Activated naive CD4-positive, alpha-beta T cell treated with anti-CD3 and anti-CD28 coated beads for 36 hours (primary cell): ENCODE measurements at regions of chr5 and their contacts with region 1.

Region 1: DNA sequence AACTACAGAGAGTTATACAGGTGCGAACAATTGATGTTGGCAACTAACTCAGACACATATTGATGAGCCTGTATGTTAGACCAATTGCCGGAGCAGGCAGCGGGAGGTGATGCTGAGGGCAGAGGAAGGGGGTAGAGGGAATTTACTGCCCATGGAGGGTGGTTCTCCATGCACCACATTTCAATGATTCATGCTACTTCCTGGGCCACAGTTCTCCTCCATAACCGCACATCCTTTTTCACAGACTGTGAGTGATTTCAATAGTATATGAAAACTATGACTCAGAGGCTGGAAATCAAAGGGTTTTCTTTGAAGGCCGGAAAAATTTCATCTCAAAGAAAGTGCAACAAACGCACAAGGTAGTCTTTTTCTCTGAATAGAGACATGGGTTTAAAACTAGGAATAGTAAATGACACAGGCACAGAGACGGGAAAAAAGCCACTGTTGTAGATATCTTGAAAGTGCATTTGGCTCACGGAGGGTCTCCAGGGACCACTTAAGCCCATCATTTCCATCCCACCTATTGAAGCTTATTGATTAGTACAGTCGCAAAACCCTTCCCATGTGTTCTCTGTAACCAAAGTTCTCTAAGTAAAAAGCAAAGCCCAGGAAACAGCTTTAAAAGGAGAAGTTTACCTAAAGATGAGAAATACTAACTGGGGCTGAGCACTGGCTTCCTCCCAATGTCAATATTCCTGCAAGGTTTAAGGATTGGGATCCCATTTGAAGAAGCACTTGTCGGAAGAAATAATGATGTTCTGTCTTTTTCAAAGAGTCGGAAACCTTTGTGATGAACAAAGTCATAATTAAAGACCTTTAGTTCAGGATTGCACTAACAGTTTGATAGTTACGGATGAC is 28.0 kb upstream of the ADAM19 start:
- DNase-seq: peak; percentile 82
- H3K4me3 Mint-ChIP-seq: peak overlapping the region; percentile 3
- H3K27ac Mint-ChIP-seq: peak overlapping the region; percentile 94
- H3K4me1 Mint-ChIP-seq: peaks cover 87% of the 10 kb centered on the region
- H3K27me3 Mint-ChIP-seq: no peaks in the 10 kb centered on the region

Region 2: DNA sequence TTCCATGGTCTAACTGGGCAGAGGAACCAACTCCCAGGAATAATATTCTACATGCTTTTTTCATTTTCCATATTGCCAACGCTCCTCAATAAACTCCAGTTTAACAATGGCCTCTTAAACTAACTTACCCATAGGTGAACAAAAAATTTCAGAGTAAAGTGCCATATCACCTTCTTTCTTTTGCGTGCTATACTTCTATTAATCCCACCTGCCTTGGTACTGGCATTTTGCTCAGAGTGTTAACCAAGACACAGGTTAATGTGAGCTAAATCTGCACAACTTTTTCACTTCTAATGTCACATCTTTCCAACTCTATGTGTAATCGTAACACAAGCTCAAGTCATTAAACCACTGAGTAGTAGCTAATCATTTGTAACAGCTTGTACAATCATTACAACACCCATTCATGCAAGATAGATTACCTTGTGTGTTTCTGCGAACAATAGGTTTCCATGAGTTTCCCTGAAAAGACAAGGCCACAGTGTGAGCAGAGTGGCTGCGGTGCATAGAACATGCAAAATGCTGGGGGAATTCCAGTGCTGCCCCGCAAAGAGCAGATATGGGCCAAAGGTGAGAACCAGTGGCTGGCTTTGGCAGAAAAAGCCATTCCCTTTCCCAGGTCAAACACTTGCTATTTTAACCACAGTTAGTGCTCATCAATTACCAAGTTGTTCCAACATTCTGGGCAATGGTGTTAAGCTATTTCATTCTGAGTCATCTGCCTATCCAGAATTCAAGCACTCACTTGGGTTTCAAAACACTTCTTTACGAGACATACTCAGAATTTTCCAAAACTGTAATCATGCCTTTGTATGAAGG is 683.3 kb before region 1 on chr5:
- CTCF ChIA-PET with region 1: no interaction called
- intact Hi-C with region 1: loop called (anchors 1 kb)
- DNase-seq: peak; percentile 89
- H3K4me3 Mint-ChIP-seq: peak overlapping the region; percentile 55
- H3K27ac Mint-ChIP-seq: peak overlapping the region; percentile 93
- H3K4me1 Mint-ChIP-seq: peaks cover 70% of the 10 kb centered on the region
- H3K27me3 Mint-ChIP-seq: no peaks in the 10 kb centered on the region

Region 3: DNA sequence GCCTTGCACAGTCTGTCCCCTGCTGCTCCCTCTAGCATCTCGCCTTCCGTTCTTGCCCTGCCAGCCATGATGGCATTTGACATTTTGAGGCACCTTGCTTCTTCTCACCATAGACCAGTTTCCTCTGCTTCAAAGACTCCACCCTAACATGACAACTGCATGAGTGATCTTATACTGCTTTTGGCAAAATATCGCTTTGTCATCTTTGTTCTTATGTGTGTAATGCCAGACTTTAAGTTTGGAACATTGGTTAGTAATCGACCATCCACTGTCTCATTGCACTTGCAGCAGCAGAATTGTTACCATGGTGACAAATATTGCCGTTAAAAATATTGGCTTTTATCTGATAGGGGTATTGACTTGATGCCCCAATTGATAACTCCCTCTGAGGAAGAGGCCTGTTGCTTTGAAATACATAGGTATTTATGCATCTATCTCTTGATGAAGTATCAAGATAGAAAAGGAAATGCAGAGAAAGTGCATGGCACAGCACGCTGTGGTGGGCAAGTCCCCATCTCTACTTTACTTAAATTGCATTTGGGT is 444.3 kb before region 1 on chr5:
- CTCF ChIA-PET with region 1: no interaction called
- intact Hi-C with region 1: loop called (anchors 5 kb)
- DNase-seq: peak; percentile 72
- H3K4me3 Mint-ChIP-seq: peak overlapping the region; percentile 22
- H3K27ac Mint-ChIP-seq: peak overlapping the region; percentile 93
- H3K4me1 Mint-ChIP-seq: peaks cover 76% of the 10 kb centered on the region
- H3K27me3 Mint-ChIP-seq: no peaks in the 10 kb centered on the region

Region 4: GRCh38 chr5:157271740-157272271 is 331.8 kb before region 1 on chr5:
- CTCF ChIA-PET with region 1: no interaction called
- intact Hi-C with region 1: loop called (anchors 1 kb)
- DNase-seq: peak; percentile 96
- H3K4me3 Mint-ChIP-seq: peak overlapping the region; percentile 74
- H3K27ac Mint-ChIP-seq: peak overlapping the region; percentile 99
- H3K4me1 Mint-ChIP-seq: peaks cover 79% of the 10 kb centered on the region
- H3K27me3 Mint-ChIP-seq: no peaks in the 10 kb centered on the region

Region 5: GRCh38 chr5:157575381-157576020 is 28.1 kb before region 1 on chr5 and contains the start of gene ADAM19:
- CTCF ChIA-PET with region 1: no interaction called
- intact Hi-C with region 1: loop called (anchors 5 kb)
- DNase-seq: peak; percentile 31
- H3K4me3 Mint-ChIP-seq: peak within 1 kb of the TSS; percentile 89
- H3K27ac Mint-ChIP-seq: peak within 1 kb of the TSS; percentile 74
- H3K4me1 Mint-ChIP-seq: peaks cover 42% of the 10 kb centered on the region
- H3K27me3 Mint-ChIP-seq: peaks cover 13% of the 10 kb centered on the region
- total RNA-seq, gene ADAM19: 37.3 to 39.3 TPM

Region 6: GRCh38 chr5:157858527-157859226 is 255.1 kb after region 1 on chr5 and contains the start of gene CLINT1:
- CTCF ChIA-PET with region 1: interaction called, 3 read pairs
- intact Hi-C with region 1: loop called (anchors 2 kb)
- DNase-seq: peak; percentile 90
- H3K4me3 Mint-ChIP-seq: peak within 1 kb of the TSS; percentile 86
- H3K27ac Mint-ChIP-seq: peak within 1 kb of the TSS; percentile 87
- H3K4me1 Mint-ChIP-seq: peaks cover 70% of the 10 kb centered on the region
- H3K27me3 Mint-ChIP-seq: no peaks in the 10 kb centered on the region
- total RNA-seq, gene CLINT1: 31.0 to 32.7 TPM

Region 7: DNA sequence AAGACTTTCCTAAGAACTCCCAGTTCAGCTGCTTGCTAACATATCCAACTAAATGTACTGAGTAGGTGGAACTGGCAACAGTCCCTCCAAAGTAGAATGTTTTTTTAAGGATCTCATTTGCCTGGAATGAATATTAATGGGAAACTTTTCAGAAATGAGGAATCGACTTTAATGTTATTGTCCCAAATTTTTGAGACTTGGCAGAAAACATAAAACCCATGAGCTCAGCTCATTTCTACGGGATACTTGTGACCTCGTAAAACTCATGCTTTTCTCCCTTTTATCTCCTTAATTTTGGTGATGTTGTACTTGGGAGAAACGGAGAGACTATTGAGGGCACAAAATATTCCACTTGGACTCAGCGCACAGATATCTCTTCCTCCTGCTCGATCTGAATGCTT is 1199.4 kb after region 1 on chr5:
- CTCF ChIA-PET with region 1: no interaction called
- intact Hi-C with region 1: no loop called
- DNase-seq: no peak
- H3K4me3 Mint-ChIP-seq: no peak overlapping the region
- H3K27ac Mint-ChIP-seq: no peak overlapping the region
- H3K4me1 Mint-ChIP-seq: no peaks in the 10 kb centered on the region
- H3K27me3 Mint-ChIP-seq: no peaks in the 10 kb centered on the region